ENCODE measurements at regions of chr6 and their contacts with region 1.

Region 1: DNA sequence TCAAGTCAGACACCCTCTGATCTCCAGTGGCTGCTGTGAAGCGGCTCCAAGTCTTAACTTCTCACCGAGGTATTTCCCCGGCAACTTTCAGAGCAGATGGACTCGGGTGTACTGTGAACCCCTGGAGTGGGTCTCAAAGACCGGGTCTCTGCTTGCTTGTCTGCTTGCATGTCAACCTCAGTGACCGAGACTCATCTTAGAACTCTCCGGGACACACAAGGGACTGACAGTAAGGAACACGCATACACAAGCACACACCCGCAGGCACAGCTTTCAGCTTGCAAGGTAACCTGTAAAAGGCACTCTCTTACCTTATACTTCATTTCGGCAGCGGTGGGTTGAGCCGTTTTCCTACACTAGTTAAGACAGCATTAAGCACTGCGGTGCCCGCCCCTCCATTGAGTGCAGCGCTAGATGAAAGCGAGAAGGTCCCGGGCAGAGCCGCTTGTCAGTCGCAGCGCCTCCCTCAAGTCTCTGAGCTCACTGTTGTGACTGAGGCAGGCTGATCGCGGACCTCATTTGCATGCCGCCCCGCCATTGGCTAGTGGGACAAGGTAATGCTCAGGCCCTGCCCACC is at the start of gene NEDD9:
- DNase-seq: peak; percentile 97
- ATAC-seq: peak; percentile 98 to 99
- total RNA-seq, gene NEDD9: 34.0 to 42.9 TPM

Region 2: DNA sequence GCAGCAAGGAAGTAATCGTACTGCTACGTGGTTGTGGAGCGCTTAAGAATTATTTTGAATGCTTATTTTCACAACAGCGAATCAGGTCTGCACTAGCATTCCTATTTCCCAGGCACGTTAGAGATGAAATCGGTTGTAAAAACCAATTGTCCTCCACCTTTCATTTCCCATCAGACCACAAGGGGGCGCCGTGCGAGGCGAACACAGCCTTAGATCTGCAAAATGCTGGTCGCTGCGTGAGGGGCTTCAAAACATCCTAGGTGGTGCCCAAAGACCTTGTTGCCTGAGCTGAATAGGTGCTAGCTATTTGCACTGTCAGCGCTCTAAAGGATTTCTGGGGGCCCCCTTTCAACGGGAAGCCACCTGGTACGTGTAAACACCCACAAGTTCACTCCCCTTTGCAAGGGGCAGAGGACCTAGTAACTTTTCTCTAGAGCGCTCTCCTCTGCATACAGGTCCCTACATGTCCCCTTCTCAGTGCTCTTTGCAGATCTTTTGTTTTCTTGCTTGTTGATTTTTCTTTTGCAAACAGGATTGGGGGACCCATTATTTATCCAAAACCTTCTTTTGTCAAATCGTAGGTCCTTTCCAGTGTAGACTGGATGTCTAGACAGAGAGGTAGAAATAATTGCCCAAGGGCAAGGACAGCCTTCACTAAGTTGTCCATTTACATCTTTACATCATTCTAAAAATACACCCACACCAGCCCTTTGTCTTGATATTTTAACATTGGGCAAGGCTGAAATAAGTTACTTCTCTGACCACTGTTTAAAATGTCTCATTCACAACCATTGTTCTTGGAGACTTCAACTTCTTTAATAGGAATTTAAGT is 59.6 kb before region 1 on chr6:
- intact Hi-C with region 1: loop called in 1 of 2 experiments (anchors 5 kb)
- DNase-seq: peak; percentile 76
- ATAC-seq: peak; percentile 65 to 67

Region 3: DNA sequence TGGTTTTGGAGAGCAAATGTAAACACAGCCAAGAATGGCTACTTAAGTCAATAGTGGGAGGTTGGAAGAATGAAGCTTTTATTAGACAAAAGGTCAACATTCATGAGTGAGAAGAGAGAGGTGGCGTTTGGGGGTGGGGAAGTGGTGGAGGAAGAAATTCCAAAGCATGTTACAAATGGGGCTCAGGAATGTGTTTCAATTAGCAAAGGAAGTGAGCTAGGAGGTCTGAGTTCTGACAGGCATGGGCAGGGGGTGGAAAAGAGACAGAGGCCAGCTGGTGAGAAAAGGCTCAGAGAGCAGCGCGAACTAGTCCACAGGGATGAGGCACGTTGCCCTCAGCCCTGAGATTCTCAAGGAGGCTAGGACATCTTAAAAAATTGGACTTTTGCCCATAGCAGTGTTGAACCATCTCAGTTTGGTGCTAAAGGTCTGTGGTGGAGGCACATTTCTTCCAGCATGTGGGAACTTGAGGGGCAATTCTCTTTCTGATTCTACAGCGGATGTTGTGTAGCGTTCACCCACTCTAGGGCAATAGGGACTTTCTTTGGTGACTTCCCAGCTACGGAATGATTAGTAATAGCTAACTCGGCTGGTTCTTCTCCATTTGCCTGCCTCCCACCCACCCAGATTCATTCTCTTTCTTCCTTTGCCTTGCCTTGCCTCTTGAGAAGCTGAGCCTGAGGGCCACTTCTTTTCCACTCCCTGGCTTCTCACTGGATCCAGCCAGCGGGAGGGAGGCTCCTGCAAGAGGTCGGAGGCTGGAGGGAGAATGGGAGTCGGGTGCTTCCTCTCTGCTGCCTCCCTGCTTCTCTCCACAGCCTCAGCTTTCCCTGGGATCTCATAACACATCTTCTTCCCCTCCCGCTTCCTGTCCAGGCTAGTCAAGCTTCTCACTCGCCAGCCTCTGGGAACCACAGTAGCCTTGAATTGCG is 45.3 kb after region 1 on chr6:
- intact Hi-C with region 1: no loop called
- DNase-seq: no peak
- ATAC-seq: peak; percentile 74 to 79

Region 4: GRCh38 chr6:11317885-11318771 is 85.8 kb after region 1 on chr6:
- intact Hi-C with region 1: loop called in 1 of 2 experiments (anchors 2 kb)
- DNase-seq: peak; percentile 65
- ATAC-seq: peak; percentile 72 to 92

Region 5: GRCh38 chr6:11366183-11366933 is 134.1 kb after region 1 on chr6:
- intact Hi-C with region 1: loop called in 1 of 2 experiments (anchors 10 kb)
- DNase-seq: no peak
- ATAC-seq: no peak